Mucosa of descending colon (tissue), 3 donors: ENCODE measurements at regions of chr13 and their contacts with region 1.

Region 1: DNA sequence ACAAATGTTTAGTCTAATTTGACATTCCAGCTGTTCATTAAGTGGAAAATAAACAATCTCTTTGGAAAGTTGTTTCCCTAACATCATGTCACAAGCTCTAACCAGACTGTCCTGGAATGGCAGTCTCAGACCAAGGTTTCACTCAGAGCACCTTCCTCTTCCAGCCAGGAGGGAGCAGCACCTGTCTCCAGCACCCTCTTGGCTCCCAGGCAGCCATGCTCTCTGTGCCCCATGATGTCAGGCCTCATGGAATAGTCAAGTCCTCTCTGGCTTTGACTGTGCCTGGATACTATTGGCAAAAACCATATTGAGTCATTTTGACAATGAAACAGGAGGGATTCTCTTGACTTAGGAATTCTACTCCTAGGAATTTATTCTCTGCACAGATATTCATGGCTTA is 171.4 kb downstream of the OXGR1 start:
- DNase-seq: peak in 2 of 3 donors; percentile 54 to 58
- ATAC-seq: peak; percentile 86
- H3K4me3 ChIP-seq: no peak overlapping the region
- H3K4me1 ChIP-seq: no peaks in the 10 kb centered on the region
- CTCF ChIP-seq: no peak

Region 2: DNA sequence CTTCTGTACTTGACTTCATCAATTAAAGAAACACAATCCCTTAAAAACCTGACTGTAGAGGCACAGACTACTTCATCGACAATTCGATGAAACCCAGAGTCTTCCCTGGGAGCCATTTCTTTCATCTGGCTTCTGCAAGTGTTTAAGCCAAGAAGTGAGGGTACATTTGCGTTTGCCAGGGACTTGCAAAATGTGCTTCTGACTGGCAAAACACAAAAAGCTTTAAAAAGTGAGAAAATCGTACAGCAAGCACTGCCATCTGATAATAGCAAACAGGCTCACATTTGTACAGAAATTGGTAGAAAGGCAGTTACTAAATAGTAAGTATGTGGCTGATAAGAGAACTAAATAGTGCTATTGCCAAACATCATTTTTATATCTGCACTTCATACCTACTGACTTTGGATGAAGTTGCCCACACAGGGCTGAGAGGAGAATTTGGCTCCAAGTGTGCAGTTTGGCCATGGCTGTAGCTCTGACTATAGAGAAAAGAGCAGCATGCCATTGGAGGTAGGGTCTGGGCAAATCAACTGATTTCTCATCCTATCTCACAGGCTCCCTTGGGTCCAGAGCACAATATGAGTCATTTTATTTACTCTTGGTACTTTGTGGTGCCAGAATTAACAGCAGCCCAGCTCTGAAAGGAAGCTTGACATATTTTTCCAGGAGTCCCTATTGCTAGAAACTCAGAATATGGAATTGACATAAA is 186.7 kb before region 1 on chr13:
- intact Hi-C with region 1: no loop called
- DNase-seq: no peak
- ATAC-seq: no peak
- H3K4me3 ChIP-seq: no peak overlapping the region
- H3K4me1 ChIP-seq: no peaks in the 10 kb centered on the region
- CTCF ChIP-seq: no peak

Region 3: DNA sequence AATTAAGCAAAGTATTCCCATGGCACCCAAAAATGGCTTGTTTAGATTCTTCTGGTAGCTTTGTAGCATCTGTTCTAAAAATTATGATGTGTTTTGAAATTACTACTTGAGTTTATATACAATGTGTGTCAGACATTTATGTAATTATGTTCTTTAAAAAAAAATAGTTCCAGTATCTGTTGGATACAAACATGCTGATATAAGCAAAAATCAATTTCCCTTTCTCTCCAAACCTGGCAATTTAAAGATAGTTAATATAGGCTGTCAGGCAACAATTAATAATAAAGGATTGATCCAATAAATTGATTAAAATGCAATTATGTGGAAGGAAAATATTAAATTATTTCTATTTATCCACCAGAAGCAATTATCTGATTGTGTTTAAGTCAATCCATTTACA is 129.7 kb after region 1 on chr13:
- intact Hi-C with region 1: loop called in 1 of 2 experiments (anchors 5 kb)
- DNase-seq: no peak
- ATAC-seq: no peak
- H3K4me3 ChIP-seq: no peak overlapping the region
- H3K4me1 ChIP-seq: no peaks in the 10 kb centered on the region
- CTCF ChIP-seq: no peak